ENCODE measurements at regions of chr12 and their contacts with region 1.

Region 1: GRCh38 chr12:80946594-80946993 is 8.9 kb upstream of the LIN7A start:
- DNase-seq: no peak
- ATAC-seq: peak; percentile 46 to 71 (median 62)
- H3K4me3 ChIP-seq: no peak overlapping the region
- H3K27ac ChIP-seq: no peak overlapping the region
- H3K4me1 ChIP-seq: no peaks in the 10 kb centered on the region
- H3K27me3 ChIP-seq: no peaks in the 10 kb centered on the region
- CTCF ChIP-seq: peak; percentile 45 to 47 (median 45)
- POLR2A ChIP-seq: no peak

Region 2: DNA sequence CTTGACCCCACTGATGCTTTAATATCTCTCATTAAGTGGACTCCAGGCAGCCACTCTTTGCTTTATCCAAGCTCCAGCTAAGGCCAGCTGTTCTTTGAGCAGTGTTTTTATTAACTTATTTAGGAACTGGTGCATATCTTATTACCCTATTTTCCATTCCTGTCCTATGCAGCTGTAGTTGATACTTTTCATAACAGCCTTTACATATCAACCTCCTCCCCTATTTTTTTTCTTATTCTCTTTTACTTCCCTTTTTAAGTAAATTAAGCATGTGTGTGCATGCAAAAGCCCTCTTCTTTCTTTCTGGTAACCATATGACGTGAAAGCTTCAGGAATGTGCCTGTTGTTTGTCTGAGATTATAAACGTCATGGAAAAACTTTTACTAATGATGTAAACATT is 381.3 kb before region 1 on chr12:
- intact Hi-C with region 1: no loop called
- DNase-seq: no peak
- ATAC-seq: no peak
- H3K4me3 ChIP-seq: no peak overlapping the region
- H3K27ac ChIP-seq: no peak overlapping the region
- H3K4me1 ChIP-seq: no peaks in the 10 kb centered on the region
- H3K27me3 ChIP-seq: no peaks in the 10 kb centered on the region
- CTCF ChIP-seq: no peak
- POLR2A ChIP-seq: no peak

Region 3: GRCh38 chr12:80837348-80837985 is 109.1 kb before region 1 on chr12:
- intact Hi-C with region 1: loop called in 1 of 2 experiments (anchors 10 kb)
- DNase-seq: no peak
- ATAC-seq: peak; percentile 91 to 94 (median 92)
- H3K4me3 ChIP-seq: no peak overlapping the region
- H3K27ac ChIP-seq: peak overlapping the region in 2 of 3 donors; percentile 12 to 35
- H3K4me1 ChIP-seq: peaks cover 0 to 20% (median 0%) of the 10 kb centered on the region in 4 donors
- H3K27me3 ChIP-seq: no peaks in the 10 kb centered on the region
- CTCF ChIP-seq: peak; percentile 71 to 82 (median 78)
- POLR2A ChIP-seq: no peak

Region 4: DNA sequence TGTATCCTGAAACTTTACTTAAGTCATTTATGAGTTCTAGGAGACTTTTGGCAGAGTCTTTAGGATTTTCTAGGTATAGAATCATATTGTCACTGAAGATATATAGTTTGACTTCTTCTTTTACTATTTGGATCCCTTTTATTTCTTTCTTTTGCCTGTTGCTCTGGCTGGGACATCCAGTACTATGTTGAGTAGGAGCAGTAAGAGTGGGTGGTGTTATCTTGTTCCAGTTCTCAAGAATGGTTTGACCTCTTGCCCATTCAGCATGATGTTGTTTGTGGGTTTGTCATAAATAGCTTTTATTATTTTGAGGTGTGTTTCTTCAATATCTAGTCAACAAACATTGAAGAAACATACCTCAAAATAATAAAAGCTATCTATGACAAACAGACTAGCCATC is 43.9 kb before region 1 on chr12:
- intact Hi-C with region 1: no loop called
- DNase-seq: no peak
- ATAC-seq: no peak
- H3K4me3 ChIP-seq: no peak overlapping the region
- H3K27ac ChIP-seq: no peak overlapping the region
- H3K4me1 ChIP-seq: no peaks in the 10 kb centered on the region
- H3K27me3 ChIP-seq: no peaks in the 10 kb centered on the region
- CTCF ChIP-seq: no peak
- POLR2A ChIP-seq: no peak

Measured in right lobe of liver (tissue), 6 donors.